ENCODE measurements at regions of chr18 and their contacts with region 1.

Region 1: GRCh38 chr18:59988098-59988706 is 88.4 kb downstream of the PMAIP1 start:
- DNase-seq: peak; percentile 51
- H3K4me3 ChIP-seq: no peak overlapping the region
- H3K27ac ChIP-seq: no peak overlapping the region
- H3K4me1 ChIP-seq: no peaks in the 10 kb centered on the region
- H3K27me3 ChIP-seq: no peaks in the 10 kb centered on the region
- CTCF ChIP-seq: peak; percentile 97

Region 2: DNA sequence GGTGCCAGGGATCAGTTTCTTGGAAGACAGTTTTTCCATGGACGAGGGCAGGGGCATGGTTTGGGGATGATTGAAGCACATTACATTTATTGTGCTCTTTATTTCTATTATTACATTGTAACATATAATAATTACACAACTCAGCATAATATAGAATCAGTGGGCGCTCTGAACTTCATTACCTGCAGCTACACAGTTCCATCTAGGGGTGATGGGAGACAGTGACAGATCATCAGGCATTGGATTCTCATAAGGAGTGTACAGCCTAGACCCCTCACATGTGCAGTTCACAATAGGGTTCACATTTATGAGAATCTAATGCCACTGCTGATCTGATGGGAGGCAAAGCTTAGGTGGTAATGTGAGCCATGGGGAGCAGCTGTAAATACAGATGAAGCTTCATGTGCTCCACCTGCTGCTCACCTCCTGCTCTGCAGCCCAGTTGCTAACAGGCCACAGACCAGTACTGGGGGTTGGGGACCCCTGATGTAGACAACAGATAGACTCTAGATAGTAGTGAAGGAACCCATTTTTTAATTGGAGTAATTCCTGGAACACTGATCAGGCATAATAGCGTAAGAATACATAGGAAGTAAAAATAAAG is 425.8 kb after region 1 on chr18:
- CTCF ChIA-PET with region 1: interaction called, 3 read pairs
- POLR2A ChIA-PET with region 1: no interaction called
- intact Hi-C with region 1: loop called (anchors 2 kb)
- DNase-seq: peak; percentile 14
- H3K4me3 ChIP-seq: no peak overlapping the region
- H3K27ac ChIP-seq: no peak overlapping the region
- H3K4me1 ChIP-seq: no peaks in the 10 kb centered on the region
- H3K27me3 ChIP-seq: peaks cover 3% of the 10 kb centered on the region
- CTCF ChIP-seq: peak; percentile 51

Region 3: DNA sequence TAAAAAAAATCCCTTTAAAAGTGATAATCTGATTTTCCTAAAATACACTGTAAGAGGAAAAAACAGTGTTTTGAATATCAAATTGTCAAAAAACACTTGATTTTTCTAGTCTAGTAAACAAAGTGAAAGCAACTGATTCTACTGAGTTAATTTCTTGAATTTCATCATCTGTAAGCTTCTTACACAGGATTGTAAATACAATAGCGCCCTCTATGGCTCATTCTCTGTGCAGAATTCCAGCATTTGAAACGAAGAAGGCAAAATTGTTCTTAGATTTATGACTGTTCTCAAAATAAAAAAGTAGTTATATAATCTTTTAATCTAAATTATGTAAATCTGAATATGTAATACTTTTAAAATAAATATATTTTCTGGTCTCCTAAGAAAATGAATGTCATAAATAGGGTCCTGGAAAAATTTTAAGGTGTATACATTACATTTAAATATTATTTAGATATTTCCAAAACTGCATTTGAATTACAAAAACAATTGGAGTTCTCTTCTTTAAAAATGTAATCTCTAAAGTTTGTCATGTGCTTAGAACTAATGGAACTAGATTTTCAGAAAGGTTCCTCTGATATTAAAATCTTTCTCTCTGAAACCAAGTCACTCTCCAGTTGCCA is 561.2 kb after region 1 on chr18:
- CTCF ChIA-PET with region 1: interaction called, 3 read pairs
- POLR2A ChIA-PET with region 1: no interaction called
- intact Hi-C with region 1: loop called (anchors 2 kb)
- DNase-seq: peak; percentile 75
- H3K4me3 ChIP-seq: no peak overlapping the region
- H3K27ac ChIP-seq: no peak overlapping the region
- H3K4me1 ChIP-seq: no peaks in the 10 kb centered on the region
- H3K27me3 ChIP-seq: no peaks in the 10 kb centered on the region
- CTCF ChIP-seq: peak; percentile 83